PC-3 (cell line): ENCODE measurements at regions of chr3 and their contacts with region 1.

Region 1: GRCh38 chr3:151282921-151283320 is 4.6 kb upstream of the P2RY14 start:
- DNase-seq: peak; percentile 64
- ATAC-seq: peak; percentile 51
- H3K4me3 ChIP-seq: no peak overlapping the region
- H3K27ac ChIP-seq: peak overlapping the region; percentile 2; the same call in 1 of the 2 replicates
- H3K4me1 ChIP-seq: peaks cover 18% of the 10 kb centered on the region
- H3K27me3 ChIP-seq: no peaks in the 10 kb centered on the region
- CTCF ChIP-seq: peak; percentile 82

Region 2: GRCh38 chr3:151227807-151228665 is 54.9 kb before region 1 on chr3:
- CTCF ChIA-PET with region 1: no interaction called
- POLR2A ChIA-PET with region 1: no interaction called
- intact Hi-C with region 1: loop called (anchors 1 kb)
- DNase-seq: peak; percentile 81
- ATAC-seq: peak; percentile 82
- H3K4me3 ChIP-seq: no peak overlapping the region
- H3K27ac ChIP-seq: peak overlapping the region; percentile 63
- H3K4me1 ChIP-seq: peaks cover 31% of the 10 kb centered on the region
- H3K27me3 ChIP-seq: no peaks in the 10 kb centered on the region
- CTCF ChIP-seq: peak; percentile 97

Region 3: GRCh38 chr3:151552589-151552988 is 269.7 kb after region 1 on chr3:
- CTCF ChIA-PET with region 1: no interaction called
- POLR2A ChIA-PET with region 1: no interaction called
- intact Hi-C with region 1: no loop called
- DNase-seq: no peak
- ATAC-seq: no peak
- H3K4me3 ChIP-seq: no peak overlapping the region
- H3K27ac ChIP-seq: no peak overlapping the region
- H3K4me1 ChIP-seq: peaks cover 11% of the 10 kb centered on the region
- H3K27me3 ChIP-seq: no peaks in the 10 kb centered on the region
- CTCF ChIP-seq: no peak